Vagina (tissue), 2 donors: ENCODE measurements at regions of chr1 and their contacts with region 1.

Region 1: GRCh38 chr1:48697066-48697707 is 79.5 kb downstream of the BEND5 start:
- DNase-seq: no peak
- H3K4me3 ChIP-seq: no peak overlapping the region
- H3K27ac ChIP-seq: no peak overlapping the region
- H3K4me1 ChIP-seq: no peaks in the 10 kb centered on the region
- H3K27me3 ChIP-seq: no peaks in the 10 kb centered on the region
- CTCF ChIP-seq: peak; percentile 63 to 76 (median 67)
- POLR2A ChIP-seq: no peak

Region 2: DNA sequence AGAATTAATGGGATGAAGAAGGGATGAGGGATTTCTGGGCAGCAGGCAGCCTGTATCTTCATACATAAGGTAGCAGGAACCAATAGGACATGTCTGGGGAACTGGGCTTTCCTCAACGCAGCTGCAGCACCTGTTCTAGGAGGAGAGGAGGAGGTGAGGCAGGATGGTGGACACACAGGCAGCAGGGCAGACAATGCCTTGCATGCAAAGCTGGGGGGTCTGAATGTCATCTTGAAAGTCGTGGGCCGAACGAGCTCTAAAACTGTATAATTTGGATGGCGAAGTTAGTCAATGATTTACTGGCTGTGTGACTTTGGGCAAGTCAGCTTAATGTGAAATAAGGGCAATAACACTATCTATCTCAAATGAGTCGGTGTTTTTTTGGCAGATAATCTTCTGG is 44.9 kb before region 1 on chr1:
- intact Hi-C with region 1: loop called (anchors 2 kb)
- DNase-seq: no peak
- H3K4me3 ChIP-seq: no peak overlapping the region
- H3K27ac ChIP-seq: no peak overlapping the region
- H3K4me1 ChIP-seq: no peaks in the 10 kb centered on the region
- H3K27me3 ChIP-seq: no peaks in the 10 kb centered on the region
- CTCF ChIP-seq: no peak
- POLR2A ChIP-seq: no peak

Region 3: GRCh38 chr1:48670241-48671020 is 26.8 kb before region 1 on chr1:
- intact Hi-C with region 1: no loop called
- DNase-seq: no peak
- H3K4me3 ChIP-seq: no peak overlapping the region
- H3K27ac ChIP-seq: no peak overlapping the region
- H3K4me1 ChIP-seq: no peaks in the 10 kb centered on the region
- H3K27me3 ChIP-seq: no peaks in the 10 kb centered on the region
- CTCF ChIP-seq: no peak
- POLR2A ChIP-seq: no peak

Region 4: GRCh38 chr1:48710318-48710717 is 13.1 kb after region 1 on chr1:
- intact Hi-C with region 1: no loop called
- DNase-seq: no peak
- H3K4me3 ChIP-seq: no peak overlapping the region
- H3K27ac ChIP-seq: no peak overlapping the region
- H3K4me1 ChIP-seq: no peaks in the 10 kb centered on the region
- H3K27me3 ChIP-seq: no peaks in the 10 kb centered on the region
- CTCF ChIP-seq: no peak
- POLR2A ChIP-seq: no peak

Region 5: GRCh38 chr1:48730164-48730910 is 33.1 kb after region 1 on chr1:
- intact Hi-C with region 1: loop called (anchors 1 kb)
- DNase-seq: no peak
- H3K4me3 ChIP-seq: no peak overlapping the region
- H3K27ac ChIP-seq: no peak overlapping the region
- H3K4me1 ChIP-seq: peaks cover 6% of the 10 kb centered on the region
- H3K27me3 ChIP-seq: no peaks in the 10 kb centered on the region
- CTCF ChIP-seq: no peak
- POLR2A ChIP-seq: no peak

Region 6: DNA sequence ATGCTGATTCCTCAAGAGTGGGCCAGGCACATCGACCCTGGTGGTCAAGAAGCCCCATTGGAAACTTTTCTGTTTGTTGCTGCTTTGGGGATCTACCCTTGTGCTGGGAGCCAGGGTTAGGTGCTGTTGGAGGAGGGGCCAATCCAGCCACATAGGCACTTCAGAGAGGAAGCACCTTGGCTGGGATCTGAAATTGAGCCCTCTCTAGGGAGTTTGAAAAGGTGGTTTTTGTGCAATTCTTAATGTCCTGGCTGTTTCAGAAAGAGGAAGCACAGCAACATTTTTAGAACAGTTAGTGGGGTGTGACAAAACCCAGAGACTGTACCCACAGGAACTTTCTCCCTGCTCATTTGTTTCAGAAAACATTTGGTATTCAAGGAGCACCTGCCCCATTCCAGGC is 96.7 kb after region 1 on chr1:
- intact Hi-C with region 1: no loop called
- DNase-seq: no peak
- H3K4me3 ChIP-seq: no peak overlapping the region
- H3K27ac ChIP-seq: no peak overlapping the region
- H3K4me1 ChIP-seq: peaks cover 11% of the 10 kb centered on the region
- H3K27me3 ChIP-seq: no peaks in the 10 kb centered on the region
- CTCF ChIP-seq: no peak
- POLR2A ChIP-seq: no peak